H1 (cell line): ENCODE measurements at regions of chr19 and their contacts with region 1.

Region 1: DNA sequence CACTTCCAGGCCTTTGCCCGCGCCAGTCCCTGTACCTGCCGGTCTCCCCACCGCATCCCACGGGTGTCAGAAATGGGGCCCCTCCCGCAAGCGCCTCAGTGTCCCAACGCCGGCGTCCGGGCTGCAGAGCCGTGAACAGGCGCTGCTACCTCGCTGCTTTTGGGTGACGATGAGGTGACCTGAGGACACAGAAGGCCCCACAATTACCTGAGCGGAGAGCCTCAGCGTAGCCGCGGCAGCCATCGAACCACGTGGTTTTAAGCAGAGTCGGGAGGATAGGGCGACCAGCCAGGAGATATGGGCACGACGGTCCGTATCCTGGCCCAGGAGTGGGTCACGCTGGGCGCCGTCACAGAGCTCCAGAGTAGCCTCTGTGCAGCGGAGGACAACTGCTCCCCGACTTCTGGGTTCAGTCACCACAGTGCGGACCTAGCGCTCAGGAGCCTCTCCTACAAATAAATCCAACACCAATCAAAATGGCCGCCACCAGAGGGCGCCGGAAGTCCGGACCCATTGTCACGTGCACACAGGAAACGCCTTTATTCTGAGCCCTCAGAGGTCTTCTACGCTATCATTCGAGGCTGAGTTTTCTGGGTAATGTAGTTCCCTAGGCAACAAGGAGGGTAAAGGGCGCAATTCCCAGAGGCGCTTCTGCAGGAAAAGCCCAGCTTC is at the start of gene ZNF814:
- DNase-seq: peak; percentile 85 to 93
- H3K4me3 ChIP-seq: peak within 1 kb of the TSS; percentile 89 to 97 (median 96)
- H3K27ac ChIP-seq: peak within 1 kb of the TSS; percentile 94
- H3K4me1 ChIP-seq: peaks cover 3 to 18% (median 10%) of the 10 kb centered on the region in 4 experiments; a peak in 6 of 7 replicates
- H3K27me3 ChIP-seq: no peaks in the 10 kb centered on the region
- CTCF ChIP-seq: peak in 2 of 3 experiments; percentile 24 to 30; a peak in 2 of 4 replicates
- EP300 ChIP-seq: no peak
- POLR2A ChIP-seq: peak; percentile 82 to 96
- RAD21 ChIP-seq: no peak; a peak in 1 of 4 replicates
- total RNA-seq, gene ZNF814: 90.7 and 90.9 TPM in 2 replicates

Region 2: GRCh38 chr19:57819475-57820148 is 69.1 kb before region 1 on chr19:
- CTCF ChIA-PET with region 1: no interaction called
- POLR2A ChIA-PET with region 1: interaction called, 14 read pairs
- DNase-seq: peak; percentile 63 to 73
- H3K4me3 ChIP-seq: peak overlapping the region; percentile 84 to 99 (median 96)
- H3K27ac ChIP-seq: peak overlapping the region; percentile 80
- H3K4me1 ChIP-seq: peaks cover 3 to 7% (median 5%) of the 10 kb centered on the region in 4 experiments
- H3K27me3 ChIP-seq: no peaks in the 10 kb centered on the region
- CTCF ChIP-seq: 0 out of 4 replicates have a peak, but pooled peaks of 1 of the 3 experiments have one; percentile 1
- EP300 ChIP-seq: no peak
- POLR2A ChIP-seq: peak; percentile 67 to 85
- RAD21 ChIP-seq: no peak

Region 3: DNA sequence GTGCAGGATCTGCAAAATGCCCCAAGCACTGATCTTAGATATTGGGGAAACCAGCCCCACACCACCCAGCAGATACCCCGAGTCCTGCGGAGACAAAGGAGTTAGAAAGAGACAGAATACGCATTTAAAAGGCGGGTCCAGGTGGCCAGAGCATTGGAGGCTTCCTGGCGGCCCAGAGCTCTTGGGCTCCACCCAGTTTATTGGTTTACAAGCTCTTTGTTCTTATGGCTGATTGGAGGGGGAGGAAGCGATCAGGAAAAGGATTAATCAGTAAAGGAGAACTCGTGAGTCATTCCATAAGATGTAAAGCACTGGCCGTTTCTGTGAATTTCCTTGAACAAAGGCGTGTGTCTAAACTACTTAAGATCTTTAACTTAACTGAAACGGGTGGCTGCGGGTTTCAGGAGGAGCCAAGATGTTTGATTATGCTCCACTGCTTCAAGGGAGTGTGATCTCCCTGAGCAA is 38.1 kb before region 1 on chr19:
- CTCF ChIA-PET with region 1: no interaction called
- POLR2A ChIA-PET with region 1: interaction called, 103 read pairs
- DNase-seq: peak in 1 of 2 experiments; percentile 49
- H3K4me3 ChIP-seq: peak overlapping the region; percentile 79 to 81 (median 79)
- H3K27ac ChIP-seq: peak overlapping the region; percentile 83
- H3K4me1 ChIP-seq: peaks cover 0 to 6% (median 4%) of the 10 kb centered on the region in 4 experiments; a peak in 6 of 7 replicates
- H3K27me3 ChIP-seq: no peaks in the 10 kb centered on the region
- CTCF ChIP-seq: no peak
- EP300 ChIP-seq: no peak
- POLR2A ChIP-seq: peak in 1 of 2 experiments; percentile 13; a peak in 1 of 3 replicates
- RAD21 ChIP-seq: no peak

Region 4: DNA sequence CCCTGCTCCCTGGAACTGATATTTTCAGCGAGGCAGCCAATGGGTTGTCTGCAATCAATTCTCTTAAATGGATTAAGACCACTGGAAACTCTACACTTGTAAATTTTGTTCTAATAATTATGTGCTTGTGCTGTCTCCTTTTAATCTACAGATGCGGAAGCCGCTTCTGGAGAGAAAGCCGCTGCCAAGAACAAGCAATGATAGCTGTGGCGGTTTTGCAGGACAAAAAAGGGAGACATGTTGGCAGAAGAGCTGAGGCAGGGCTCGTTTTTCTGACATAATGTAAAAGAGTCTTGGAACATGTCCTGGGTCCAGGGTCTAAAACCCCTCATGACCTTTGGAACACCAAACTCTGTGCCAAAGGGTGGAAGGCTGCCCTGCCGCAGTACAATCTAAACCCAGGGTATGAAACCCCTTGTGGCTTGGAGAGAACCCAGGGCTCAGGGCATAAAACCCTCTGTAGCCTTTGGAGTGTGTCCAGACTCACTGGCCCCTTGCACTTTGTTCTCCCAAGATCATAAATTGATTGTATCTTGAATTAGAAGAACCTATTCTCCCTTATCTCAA is 15.0 kb after region 1 on chr19:
- CTCF ChIA-PET with region 1: interaction called, 13 read pairs
- POLR2A ChIA-PET with region 1: interaction called, 28 read pairs
- DNase-seq: no peak
- H3K4me3 ChIP-seq: no peak overlapping the region
- H3K27ac ChIP-seq: no peak overlapping the region
- H3K4me1 ChIP-seq: no peaks in the 10 kb centered on the region
- H3K27me3 ChIP-seq: no peaks in the 10 kb centered on the region
- CTCF ChIP-seq: no peak
- EP300 ChIP-seq: no peak
- POLR2A ChIP-seq: no peak
- RAD21 ChIP-seq: no peak

Region 5: GRCh38 chr19:57934820-57935665 is 46.3 kb after region 1 on chr19 and contains the start of gene ZNF418:
- CTCF ChIA-PET with region 1: no interaction called
- POLR2A ChIA-PET with region 1: interaction called, 18 read pairs
- DNase-seq: peak; percentile 60 to 72
- H3K4me3 ChIP-seq: peak within 1 kb of the TSS; percentile 85 to 95 (median 94)
- H3K27ac ChIP-seq: peak within 1 kb of the TSS; percentile 94
- H3K4me1 ChIP-seq: peaks cover 0 to 6% (median 3%) of the 10 kb centered on the region in 4 experiments; a peak in 4 of 7 replicates
- H3K27me3 ChIP-seq: no peaks in the 10 kb centered on the region
- CTCF ChIP-seq: no peak
- EP300 ChIP-seq: peak in 1 of 2 experiments; percentile 89; a peak in 2 of 3 replicates
- POLR2A ChIP-seq: peak; percentile 87 to 89
- RAD21 ChIP-seq: no peak
- total RNA-seq, gene ZNF418: 18.5 and 18.8 TPM in 2 replicates

Region 6: DNA sequence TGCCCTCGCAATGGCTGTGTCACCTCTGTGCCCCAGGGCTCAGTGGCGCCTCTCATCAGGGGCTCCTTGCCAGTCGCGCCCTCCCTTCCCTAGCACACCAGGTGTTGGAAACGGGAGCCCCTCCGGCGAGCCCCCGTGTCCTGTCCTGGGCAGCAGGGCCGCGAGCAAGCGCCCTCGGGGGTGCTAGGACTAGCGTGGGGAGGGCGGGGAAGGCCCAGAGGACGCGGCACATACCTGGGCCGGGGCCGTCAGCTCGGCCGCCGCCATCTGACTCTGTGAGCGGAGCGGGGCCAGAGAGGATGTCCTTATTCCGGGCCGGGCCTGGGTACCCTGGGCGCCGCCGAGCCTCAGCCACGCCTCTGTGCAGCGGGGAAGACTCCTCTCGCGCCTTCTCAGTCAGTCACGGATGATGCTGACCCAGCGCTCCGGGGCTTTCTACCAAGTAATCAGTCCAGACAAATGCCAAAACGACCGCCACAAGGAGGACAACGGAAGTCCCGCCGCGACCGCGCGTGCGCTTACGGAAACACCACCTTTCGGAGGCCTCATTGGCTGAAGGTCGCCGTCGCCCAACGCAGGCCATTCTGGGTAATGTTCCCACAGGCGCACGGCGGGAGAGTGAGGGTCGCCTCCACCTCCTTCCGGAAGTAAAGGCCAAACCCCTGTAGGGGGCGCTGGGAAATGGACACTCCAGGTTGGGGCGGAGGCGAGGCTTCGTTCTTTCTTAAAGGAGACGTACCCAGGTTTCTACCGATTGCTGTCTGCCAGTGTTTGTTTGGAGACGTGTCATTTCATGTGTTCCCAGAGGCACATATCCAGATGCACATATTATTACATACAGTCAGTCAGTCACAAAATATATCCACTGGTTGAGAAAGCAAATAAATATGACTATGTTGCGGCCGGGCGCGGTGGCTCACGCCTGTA is 58.8 kb after region 1 on chr19 and contains the start of gene ZNF256:
- CTCF ChIA-PET with region 1: no interaction called
- POLR2A ChIA-PET with region 1: no interaction called
- DNase-seq: peak; percentile 91 to 97
- H3K4me3 ChIP-seq: peak within 1 kb of the TSS; percentile 71 to 98 (median 88)
- H3K27ac ChIP-seq: peak within 1 kb of the TSS; percentile 67; the same call in 1 of the 2 replicates
- H3K4me1 ChIP-seq: peaks cover 0 to 9% (median 2%) of the 10 kb centered on the region in 4 experiments; a peak in 5 of 7 replicates
- H3K27me3 ChIP-seq: no peaks in the 10 kb centered on the region
- CTCF ChIP-seq: peak; percentile 58 to 82 (median 61)
- EP300 ChIP-seq: peak in 1 of 2 experiments; percentile 71; a peak in 1 of 3 replicates
- POLR2A ChIP-seq: peak in 1 of 2 experiments; percentile 89; a peak in 2 of 3 replicates
- RAD21 ChIP-seq: peak; percentile 36 to 41; a peak in 3 of 4 replicates
- total RNA-seq, gene ZNF256: 13.5 and 14.2 TPM in 2 replicates